ENCODE measurements at regions of chr1 and their contacts with region 1.

Region 1: DNA sequence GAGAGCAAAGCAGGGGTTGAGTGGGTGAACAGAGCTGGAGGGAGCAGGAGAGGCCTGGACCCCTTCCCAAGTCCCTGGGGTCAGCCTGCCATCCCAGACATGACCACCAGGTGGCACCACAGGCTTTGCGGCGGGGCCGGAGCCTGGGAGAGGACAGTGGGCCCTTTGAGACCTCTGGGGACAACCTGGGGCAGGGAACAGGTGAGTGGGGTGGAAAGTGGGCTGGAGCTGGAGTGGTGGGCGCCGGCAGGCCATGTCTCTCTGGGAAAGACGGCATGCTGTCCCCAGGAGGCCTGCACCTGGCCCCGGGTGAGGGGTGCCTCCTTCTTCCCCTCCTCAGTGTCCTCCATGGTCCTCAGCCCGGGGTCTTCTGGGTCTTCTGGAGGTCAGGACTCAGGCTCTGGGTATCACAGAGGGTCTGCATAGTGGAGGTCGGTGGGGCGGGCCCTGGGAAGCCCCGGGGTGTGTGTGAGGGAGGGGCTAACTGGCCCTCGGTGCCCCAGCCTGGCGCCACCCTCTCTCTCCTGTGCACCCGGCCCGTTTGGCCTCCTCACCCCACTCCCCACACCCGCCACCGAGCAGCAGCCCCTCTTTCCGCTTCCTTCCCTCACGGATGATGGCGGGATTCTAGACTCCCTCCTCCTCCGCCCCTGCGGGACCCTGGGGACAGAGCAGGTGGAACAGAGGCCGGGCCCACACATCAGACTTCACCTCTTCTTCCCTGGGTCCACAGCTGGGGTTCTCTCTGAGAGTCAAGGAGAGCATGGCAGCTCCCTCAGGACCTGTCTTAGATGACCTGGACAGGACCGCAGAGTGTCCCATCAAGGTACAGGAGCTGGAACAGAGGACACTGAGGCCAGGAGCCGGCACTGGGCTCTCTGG is 28.4 kb upstream of the PKP1 start:
- DNase-seq: peak; percentile 15
- ATAC-seq: peak; percentile 92
- H3K4me3 ChIP-seq: no peak overlapping the region
- H3K27ac ChIP-seq: no peak overlapping the region
- H3K4me1 ChIP-seq: no peaks in the 10 kb centered on the region
- H3K27me3 ChIP-seq: peaks cover 3 to 7% of the 10 kb centered on the region in 2 experiments; a peak in 4 of 5 replicates
- CTCF ChIP-seq: peak; percentile 93
- EP300 ChIP-seq: no peak
- POLR2A ChIP-seq: no peak
- RAD21 ChIP-seq: peak; percentile 91

Region 2: GRCh38 chr1:201229771-201230635 is 24.9 kb before region 1 on chr1:
- CTCF ChIA-PET with region 1: no interaction called
- POLR2A ChIA-PET with region 1: no interaction called
- in situ Hi-C with region 1: no loop called
- intact Hi-C with region 1: no loop called
- DNase-seq: no peak
- ATAC-seq: peak; percentile 35; the same call in 1 of the 3 replicates
- H3K4me3 ChIP-seq: no peak overlapping the region
- H3K27ac ChIP-seq: no peak overlapping the region
- H3K4me1 ChIP-seq: no peaks in the 10 kb centered on the region
- H3K27me3 ChIP-seq: peaks cover 8 to 34% of the 10 kb centered on the region in 2 experiments; a peak in 4 of 5 replicates
- CTCF ChIP-seq: peak; percentile 27; the same call in 1 of the 2 replicates
- EP300 ChIP-seq: no peak
- POLR2A ChIP-seq: no peak
- RAD21 ChIP-seq: no peak

Region 3: DNA sequence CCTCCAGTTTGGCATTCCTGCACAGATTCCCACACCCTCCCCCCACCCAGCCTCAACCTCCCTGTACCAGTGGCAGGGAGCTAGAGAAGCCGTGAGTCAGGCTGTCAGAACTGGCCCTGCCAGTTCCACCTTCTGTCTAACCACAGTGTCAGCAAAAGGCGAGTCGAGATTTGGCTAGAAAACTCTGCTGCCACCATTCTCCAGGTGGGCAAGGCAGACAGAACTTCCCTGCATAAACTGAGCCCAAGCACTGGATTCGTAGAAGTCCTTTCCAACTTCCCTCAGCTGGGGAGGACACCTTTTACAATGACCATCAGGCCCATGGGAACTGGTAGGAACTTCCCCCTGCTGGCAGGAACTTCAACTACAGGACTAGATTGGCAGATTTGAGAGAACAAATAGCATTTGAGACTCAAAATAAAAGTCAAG is 91.6 kb after region 1 on chr1:
- CTCF ChIA-PET with region 1: interaction called, 4 read pairs
- POLR2A ChIA-PET with region 1: no interaction called
- in situ Hi-C with region 1: no loop called
- intact Hi-C with region 1: loop called (anchors 2 kb)
- DNase-seq: peak; percentile 23
- ATAC-seq: peak; percentile 72
- H3K4me3 ChIP-seq: no peak overlapping the region
- H3K27ac ChIP-seq: no peak overlapping the region
- H3K4me1 ChIP-seq: no peaks in the 10 kb centered on the region
- H3K27me3 ChIP-seq: peaks cover 0 to 8% of the 10 kb centered on the region in 2 experiments; a peak in 3 of 5 replicates
- CTCF ChIP-seq: peak; percentile 63
- EP300 ChIP-seq: no peak
- POLR2A ChIP-seq: no peak
- RAD21 ChIP-seq: no peak

Region 4: GRCh38 chr1:201361652-201362504 is 107.0 kb after region 1 on chr1:
- CTCF ChIA-PET with region 1: interaction called, 37 read pairs
- POLR2A ChIA-PET with region 1: no interaction called
- in situ Hi-C with region 1: loop called (anchors 5 kb)
- intact Hi-C with region 1: loop called (anchors 1 kb)
- DNase-seq: peak; percentile 28
- ATAC-seq: peak; percentile 83
- H3K4me3 ChIP-seq: no peak overlapping the region
- H3K27ac ChIP-seq: no peak overlapping the region
- H3K4me1 ChIP-seq: no peaks in the 10 kb centered on the region
- H3K27me3 ChIP-seq: peaks cover 9 to 34% of the 10 kb centered on the region in 2 experiments
- CTCF ChIP-seq: peak; percentile 85
- EP300 ChIP-seq: no peak
- POLR2A ChIP-seq: no peak
- RAD21 ChIP-seq: peak; percentile 82

Region 5: DNA sequence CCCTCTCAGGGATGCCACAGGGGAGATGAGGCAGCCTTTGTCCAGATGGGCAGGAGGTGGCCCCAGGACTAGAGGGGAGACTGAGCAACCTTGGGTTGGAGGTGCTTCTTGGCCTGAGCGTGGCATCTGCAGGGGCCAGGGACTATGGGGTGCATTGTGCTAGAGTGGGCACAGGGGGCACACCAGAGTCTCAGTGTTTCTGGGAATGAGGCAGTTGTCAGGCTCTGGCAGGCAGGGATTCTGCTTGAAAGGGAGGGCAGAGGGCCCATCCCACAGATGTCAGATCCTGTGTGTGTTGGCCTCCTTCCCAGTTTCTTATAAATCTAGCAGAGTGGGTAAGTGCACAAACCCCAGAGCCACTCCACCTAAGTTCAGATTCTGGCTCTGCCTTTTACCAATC is 952.4 kb after region 1 on chr1:
- CTCF ChIA-PET with region 1: no interaction called
- POLR2A ChIA-PET with region 1: no interaction called
- in situ Hi-C with region 1: no loop called
- intact Hi-C with region 1: no loop called
- DNase-seq: no peak
- ATAC-seq: peak; percentile 65
- H3K4me3 ChIP-seq: no peak overlapping the region
- H3K27ac ChIP-seq: no peak overlapping the region
- H3K4me1 ChIP-seq: no peaks in the 10 kb centered on the region
- H3K27me3 ChIP-seq: peaks cover 0 to 7% of the 10 kb centered on the region in 2 experiments; a peak in 4 of 5 replicates
- CTCF ChIP-seq: no peak
- EP300 ChIP-seq: no peak
- POLR2A ChIP-seq: no peak
- RAD21 ChIP-seq: no peak